Adrenal gland (tissue), 19 donors: ENCODE measurements at regions of chr6 and their contacts with region 1.

Region 1: DNA sequence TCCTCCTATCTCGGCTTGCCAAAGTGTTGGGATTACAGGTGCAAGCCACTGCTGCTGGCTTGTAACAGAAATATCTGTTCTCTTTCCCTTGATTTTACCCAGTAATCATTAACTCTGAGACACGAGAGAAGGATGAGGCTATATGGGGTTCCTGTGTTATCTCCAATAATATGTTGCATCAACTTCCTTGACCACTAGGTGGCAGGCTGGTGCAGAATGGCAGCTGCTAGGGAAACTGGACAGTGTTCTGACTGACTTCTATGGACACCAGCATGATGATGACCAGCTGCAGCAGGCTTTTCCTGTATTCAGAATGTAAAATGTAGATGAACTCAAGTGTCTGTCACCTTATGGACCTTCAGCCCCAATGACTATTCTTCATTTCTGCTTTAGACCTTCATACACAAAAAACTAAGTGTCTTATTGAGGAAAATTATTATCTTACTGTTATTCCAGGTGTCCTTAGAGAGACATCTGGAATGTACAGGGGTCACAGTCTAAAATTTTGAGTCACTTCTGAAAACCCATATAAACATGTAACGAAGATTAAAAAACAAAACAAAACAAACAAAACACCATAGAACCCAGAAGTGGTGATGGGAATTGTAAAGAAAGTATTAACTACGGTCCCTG is 20.4 kb upstream of the CD109 start:
- DNase-seq: peak; percentile 58 to 91 (median 78)
- H3K4me3 ChIP-seq: no peak overlapping the region
- H3K27ac ChIP-seq: no peak overlapping the region
- H3K4me1 ChIP-seq: no peaks in the 10 kb centered on the region
- H3K27me3 ChIP-seq: peaks cover 4% of the 10 kb centered on the region
- CTCF ChIP-seq: peak; percentile 74 to 93 (median 78)
- POLR2A ChIP-seq: no peak

Region 2: DNA sequence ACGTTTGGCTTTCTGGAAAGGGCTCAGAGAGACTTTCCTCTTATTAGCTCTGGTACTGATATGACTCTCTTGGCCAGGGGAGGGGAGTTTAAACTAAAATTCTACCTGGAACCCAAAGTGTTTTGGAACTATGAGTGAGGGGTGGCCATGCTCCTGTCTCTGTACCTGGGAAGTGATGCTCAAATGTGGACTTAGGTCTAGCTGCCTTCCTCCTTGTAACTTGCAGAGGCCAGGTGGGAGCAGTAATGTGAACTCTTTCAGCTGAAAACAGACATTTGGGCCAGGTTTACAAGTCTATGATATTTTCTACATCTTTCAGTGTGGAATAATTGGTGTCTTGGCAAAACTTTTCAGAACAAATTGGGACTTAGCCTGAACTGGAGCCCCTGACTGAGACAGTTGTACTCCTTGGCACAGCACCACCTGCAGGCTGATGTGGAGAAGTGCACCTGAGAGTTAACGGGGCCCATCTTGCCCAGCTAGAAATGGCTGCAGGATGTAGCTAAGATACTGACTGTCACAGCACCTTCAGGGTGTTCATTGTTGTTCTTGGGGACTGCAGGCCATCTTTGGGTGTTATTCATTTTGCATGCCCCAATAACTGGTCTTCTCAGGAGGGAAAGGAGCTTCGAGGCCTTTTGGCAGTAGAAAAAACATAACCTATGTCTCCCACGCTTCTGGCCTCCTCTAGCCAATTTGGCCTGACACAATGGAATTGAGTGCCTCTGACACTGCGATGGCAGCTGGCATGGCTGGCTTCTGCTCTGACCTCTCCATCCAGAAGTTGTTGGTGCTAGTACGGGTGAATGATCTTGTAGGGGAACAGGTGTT is 57.5 kb after region 1 on chr6:
- intact Hi-C with region 1: loop called (anchors 5 kb)
- DNase-seq: peak; percentile 44 to 78 (median 64)
- H3K4me3 ChIP-seq: no peak overlapping the region
- H3K27ac ChIP-seq: no peak overlapping the region
- H3K4me1 ChIP-seq: no peaks in the 10 kb centered on the region
- H3K27me3 ChIP-seq: no peaks in the 10 kb centered on the region
- CTCF ChIP-seq: peak; percentile 70 to 82 (median 75)
- POLR2A ChIP-seq: no peak